PC-9 (cell line): ENCODE measurements at regions of chr2 and their contacts with region 1.

Region 1: DNA sequence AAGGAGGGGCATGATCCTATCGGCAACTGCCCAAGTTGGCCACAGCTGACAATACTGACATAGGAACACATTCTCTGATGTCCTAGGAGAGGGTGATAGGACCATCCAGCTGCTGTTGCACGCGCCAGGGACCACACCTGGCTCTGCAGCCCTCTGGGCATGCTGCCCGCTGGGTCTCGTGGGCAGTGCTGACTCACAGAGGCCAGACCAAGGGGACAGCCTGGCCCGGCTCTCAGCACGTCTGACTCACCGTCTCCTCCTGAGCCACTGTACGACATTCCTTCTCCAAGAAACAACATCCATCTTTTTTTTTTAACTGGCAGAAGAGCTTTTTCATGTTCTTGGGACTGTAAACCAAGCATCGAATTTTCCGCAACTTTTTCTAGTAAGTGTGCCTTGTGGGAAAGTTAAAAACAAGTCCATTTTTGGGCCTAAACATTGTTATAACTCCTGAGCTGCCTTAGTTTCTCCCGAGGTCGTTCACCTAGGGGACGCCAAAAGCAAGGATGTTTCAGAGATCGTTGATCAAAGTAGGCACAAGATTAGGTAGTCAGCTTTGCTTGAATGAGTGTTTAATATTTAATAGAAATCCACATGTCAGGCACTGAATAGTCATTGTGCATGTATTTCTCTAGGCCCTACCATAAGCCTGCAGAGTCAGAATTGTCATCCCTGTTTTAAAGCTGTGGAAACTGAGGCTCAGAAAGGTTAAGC is 100.3 kb downstream of the TTC32 start:
- DNase-seq: peak; percentile 96
- H3K4me3 ChIP-seq: peak overlapping the region; percentile 15; the same call in 1 of the 2 replicates
- H3K27ac ChIP-seq: peak overlapping the region; percentile 47
- H3K4me1 ChIP-seq: peaks cover 51% of the 10 kb centered on the region
- H3K27me3 ChIP-seq: no peaks in the 10 kb centered on the region
- CTCF ChIP-seq: no peak

Region 2: GRCh38 chr2:19519045-19519444 is 282.5 kb before region 1 on chr2:
- CTCF ChIA-PET with region 1: no interaction called
- POLR2A ChIA-PET with region 1: no interaction called
- intact Hi-C with region 1: no loop called
- DNase-seq: no peak
- H3K4me3 ChIP-seq: no peak overlapping the region
- H3K27ac ChIP-seq: no peak overlapping the region
- H3K4me1 ChIP-seq: no peaks in the 10 kb centered on the region
- H3K27me3 ChIP-seq: no peaks in the 10 kb centered on the region
- CTCF ChIP-seq: no peak

Region 3: GRCh38 chr2:19617257-19617848 is 184.2 kb before region 1 on chr2:
- CTCF ChIA-PET with region 1: no interaction called
- POLR2A ChIA-PET with region 1: no interaction called
- intact Hi-C with region 1: loop called (anchors 1 kb)
- DNase-seq: peak; percentile 87 to 99
- H3K4me3 ChIP-seq: no peak overlapping the region; the same call in 1 of the 2 replicates
- H3K27ac ChIP-seq: peak overlapping the region; percentile 98
- H3K4me1 ChIP-seq: peaks cover 46% of the 10 kb centered on the region
- H3K27me3 ChIP-seq: no peaks in the 10 kb centered on the region
- CTCF ChIP-seq: no peak

Region 4: GRCh38 chr2:19673213-19673791 is 128.2 kb before region 1 on chr2:
- CTCF ChIA-PET with region 1: no interaction called
- POLR2A ChIA-PET with region 1: no interaction called
- intact Hi-C with region 1: no loop called
- DNase-seq: peak; percentile 10 to 67
- H3K4me3 ChIP-seq: no peak overlapping the region
- H3K27ac ChIP-seq: peak overlapping the region; percentile 0; the same call in 1 of the 2 replicates
- H3K4me1 ChIP-seq: peaks cover 31% of the 10 kb centered on the region
- H3K27me3 ChIP-seq: no peaks in the 10 kb centered on the region
- CTCF ChIP-seq: no peak

Region 5: GRCh38 chr2:19774805-19775176 is 26.7 kb before region 1 on chr2:
- CTCF ChIA-PET with region 1: no interaction called
- POLR2A ChIA-PET with region 1: no interaction called
- intact Hi-C with region 1: no loop called
- DNase-seq: peak in 1 of 2 experiments; percentile 20
- H3K4me3 ChIP-seq: no peak overlapping the region
- H3K27ac ChIP-seq: peak overlapping the region; percentile 42
- H3K4me1 ChIP-seq: peaks cover 17% of the 10 kb centered on the region
- H3K27me3 ChIP-seq: no peaks in the 10 kb centered on the region
- CTCF ChIP-seq: no peak

Region 6: GRCh38 chr2:19786408-19787058 is 15.0 kb before region 1 on chr2:
- CTCF ChIA-PET with region 1: no interaction called
- POLR2A ChIA-PET with region 1: no interaction called
- intact Hi-C with region 1: loop called (anchors 1 kb)
- DNase-seq: peak; percentile 65 to 94
- H3K4me3 ChIP-seq: 0 out of 2 replicates have a peak overlapping the region, but pooled peaks have one; percentile 2
- H3K27ac ChIP-seq: peak overlapping the region; percentile 100
- H3K4me1 ChIP-seq: peaks cover 55% of the 10 kb centered on the region
- H3K27me3 ChIP-seq: no peaks in the 10 kb centered on the region
- CTCF ChIP-seq: no peak

Region 7: DNA sequence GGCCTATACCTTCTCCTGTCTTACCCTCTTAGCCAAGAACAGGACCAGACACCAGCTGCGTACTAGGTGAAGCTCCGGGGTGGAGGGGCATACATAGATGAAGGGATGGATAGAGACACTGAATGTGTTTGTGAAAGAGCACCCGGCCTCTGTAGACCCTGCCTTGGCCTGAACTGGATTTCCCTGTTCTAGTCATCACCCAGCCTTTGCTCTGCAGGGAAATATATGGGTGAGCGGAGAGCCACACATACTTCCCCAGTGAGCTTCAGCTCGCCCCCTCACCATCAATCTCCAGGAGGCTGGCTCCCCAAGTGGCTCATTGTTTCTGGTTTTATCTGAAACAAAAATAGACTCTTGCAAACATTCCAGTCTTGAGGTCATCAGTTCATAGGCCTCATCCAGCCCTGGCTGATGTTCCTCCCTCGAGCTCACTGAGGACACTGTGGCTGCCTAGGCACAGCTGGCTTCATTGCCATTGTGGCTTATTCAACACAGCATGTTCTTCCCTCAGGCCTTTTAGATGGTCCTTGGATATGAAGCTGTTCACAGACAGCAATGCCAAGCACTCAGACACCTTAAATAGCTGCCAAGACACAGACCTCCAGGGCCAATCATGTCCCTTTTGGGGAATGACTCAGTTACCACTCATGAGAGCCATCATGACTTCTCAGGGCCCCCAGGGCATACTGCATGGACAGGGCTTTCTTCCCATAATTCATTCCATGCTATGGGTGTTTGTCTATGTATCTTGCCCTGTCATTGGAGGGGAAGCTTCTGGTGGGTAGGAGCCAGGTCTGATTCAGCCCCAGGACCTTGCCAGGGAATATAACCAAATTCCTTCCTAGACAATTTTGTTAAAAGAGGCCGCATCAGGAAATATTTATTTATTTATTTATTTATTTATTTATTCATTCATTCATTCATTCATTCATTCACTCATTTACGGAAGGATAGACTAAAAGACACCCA is 17.9 kb after region 1 on chr2:
- CTCF ChIA-PET with region 1: interaction called, 5 read pairs
- POLR2A ChIA-PET with region 1: interaction called, 6 read pairs
- intact Hi-C with region 1: loop called (anchors 1 kb)
- DNase-seq: peak; percentile 74 to 96
- H3K4me3 ChIP-seq: no peak overlapping the region
- H3K27ac ChIP-seq: peak overlapping the region; percentile 63
- H3K4me1 ChIP-seq: peaks cover 24% of the 10 kb centered on the region
- H3K27me3 ChIP-seq: no peaks in the 10 kb centered on the region
- CTCF ChIP-seq: no peak

Region 8: GRCh38 chr2:19911799-19912509 is 110.4 kb after region 1 on chr2:
- CTCF ChIA-PET with region 1: no interaction called
- POLR2A ChIA-PET with region 1: no interaction called
- intact Hi-C with region 1: no loop called
- DNase-seq: peak; percentile 81 to 100
- H3K4me3 ChIP-seq: no peak overlapping the region; the same call in 1 of the 2 replicates
- H3K27ac ChIP-seq: peak overlapping the region; percentile 87
- H3K4me1 ChIP-seq: peaks cover 34% of the 10 kb centered on the region
- H3K27me3 ChIP-seq: no peaks in the 10 kb centered on the region
- CTCF ChIP-seq: no peak

Region 9: DNA sequence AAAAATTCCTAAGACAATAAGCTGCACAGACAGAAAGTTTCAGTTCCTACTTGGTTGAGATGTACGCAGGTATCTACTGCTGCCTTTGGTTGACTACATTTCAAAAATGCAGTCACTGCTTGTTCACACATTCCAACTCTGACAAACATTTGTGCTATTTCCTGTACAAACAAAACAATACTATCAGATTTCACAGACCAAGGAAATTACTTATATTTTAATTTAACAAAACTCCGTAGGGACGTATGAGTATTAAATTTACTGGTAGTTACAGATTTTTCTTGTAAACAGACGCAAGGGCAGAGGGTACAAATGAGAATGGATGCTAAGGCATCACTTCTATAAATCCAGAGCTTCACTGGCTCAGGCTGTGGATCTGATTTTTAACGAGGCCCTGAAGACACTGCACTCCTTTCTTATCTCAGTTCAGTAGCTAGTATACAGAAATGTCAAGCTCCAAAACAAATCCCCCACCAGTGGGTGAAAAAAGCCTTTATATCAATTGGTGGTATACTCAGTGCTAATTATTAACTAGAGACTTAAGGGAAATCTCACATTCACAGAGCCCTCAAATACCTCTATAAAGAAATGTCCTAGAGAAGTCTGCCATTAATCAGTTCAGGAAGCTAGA is 131.9 kb after region 1 on chr2:
- CTCF ChIA-PET with region 1: no interaction called
- POLR2A ChIA-PET with region 1: no interaction called
- intact Hi-C with region 1: loop called (anchors 10 kb)
- DNase-seq: peak; percentile 33 to 95
- H3K4me3 ChIP-seq: peak overlapping the region; percentile 48
- H3K27ac ChIP-seq: peak overlapping the region; percentile 97
- H3K4me1 ChIP-seq: peaks cover 35% of the 10 kb centered on the region
- H3K27me3 ChIP-seq: no peaks in the 10 kb centered on the region
- CTCF ChIP-seq: 0 out of 2 replicates have a peak, but pooled peaks have one; percentile 13

Region 10: GRCh38 chr2:20304411-20304810 is 502.9 kb after region 1 on chr2:
- CTCF ChIA-PET with region 1: no interaction called
- POLR2A ChIA-PET with region 1: interaction called, 11 read pairs
- intact Hi-C with region 1: no loop called
- DNase-seq: no peak
- H3K4me3 ChIP-seq: no peak overlapping the region
- H3K27ac ChIP-seq: no peak overlapping the region
- H3K4me1 ChIP-seq: no peaks in the 10 kb centered on the region
- H3K27me3 ChIP-seq: no peaks in the 10 kb centered on the region
- CTCF ChIP-seq: no peak